ENCODE measurements at regions of chr3 and their contacts with region 1.

Region 1: GRCh38 chr3:98817547-98818041 is 54.5 kb downstream of the ST3GAL6 start:
- DNase-seq: no peak
- ATAC-seq: peak; percentile 82

Region 2: GRCh38 chr3:98039322-98040024 is 778.1 kb before region 1 on chr3:
- intact Hi-C with region 1: loop called (anchors 10 kb)
- DNase-seq: no peak
- ATAC-seq: peak; percentile 89

Region 3: GRCh38 chr3:98602078-98602678 is 215.4 kb before region 1 on chr3:
- intact Hi-C with region 1: loop called (anchors 1 kb)
- DNase-seq: no peak
- ATAC-seq: peak; percentile 59

Region 4: GRCh38 chr3:98901392-98902350 is 84.1 kb after region 1 on chr3 and contains the start of gene DCBLD2:
- intact Hi-C with region 1: loop called (anchors 5 kb)
- DNase-seq: peak; percentile 97
- ATAC-seq: peak; percentile 98
- total RNA-seq, gene DCBLD2: 34.7 TPM

Region 5: DNA sequence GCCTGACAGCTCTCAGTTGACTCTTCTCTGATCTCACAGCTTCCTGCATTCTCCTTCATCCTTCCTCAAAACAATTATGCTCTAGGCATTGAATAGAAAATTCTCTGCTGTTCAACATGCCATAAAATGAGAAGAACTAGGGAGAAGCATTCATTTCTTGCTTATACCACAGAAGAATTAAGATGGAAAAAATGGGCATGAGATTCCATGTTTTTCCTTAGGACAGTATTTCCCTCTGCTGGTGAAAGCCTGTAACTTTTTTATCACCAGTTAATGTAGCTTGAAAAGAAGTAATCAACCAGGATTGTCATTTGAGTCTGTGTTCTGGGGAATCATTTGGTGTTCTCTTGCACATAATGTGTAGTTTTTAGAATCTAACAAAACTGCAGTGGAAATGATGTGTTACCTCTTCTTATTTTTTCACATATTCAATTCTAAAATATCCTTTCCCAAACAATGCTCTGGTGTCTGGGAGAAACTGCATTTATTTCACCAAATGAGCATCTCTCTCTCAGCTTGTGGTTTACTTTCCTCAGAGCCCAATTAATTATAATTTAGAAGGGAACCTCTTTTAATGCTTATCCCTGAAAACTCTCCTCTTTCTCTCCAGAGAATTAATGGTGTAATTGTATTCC is 176.7 kb after region 1 on chr3:
- intact Hi-C with region 1: loop called (anchors 1 kb)
- DNase-seq: no peak
- ATAC-seq: no peak

Measured in Right ventricle myocardium inferior (tissue), 1 donor.